ENCODE measurements at regions of chr19 and their contacts with region 1.

Region 1: DNA sequence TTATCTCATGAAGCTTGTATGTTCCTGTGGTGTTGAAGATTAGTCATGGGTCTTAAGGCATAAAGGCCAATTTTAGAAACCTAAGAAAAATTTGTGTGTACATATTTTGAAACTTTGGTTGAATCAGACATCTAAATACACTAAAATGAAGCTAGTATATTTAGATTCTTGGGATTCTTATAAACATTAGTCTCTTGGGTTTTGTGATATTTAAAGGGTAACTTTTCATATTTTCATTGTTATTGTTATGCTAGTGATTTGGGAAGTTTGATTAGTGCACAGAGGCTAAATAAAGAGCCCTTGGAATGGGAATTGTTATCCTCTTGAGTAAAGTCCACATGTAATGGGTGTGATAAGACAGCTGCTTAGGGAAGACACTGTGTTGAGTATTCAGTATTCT is 24.5 kb downstream of the UBA2 start:
- DNase-seq: no peak
- H3K4me3 ChIP-seq: no peak overlapping the region
- H3K27ac ChIP-seq: no peak overlapping the region
- H3K4me1 ChIP-seq: no peaks in the 10 kb centered on the region
- H3K27me3 ChIP-seq: no peaks in the 10 kb centered on the region
- CTCF ChIP-seq: no peak

Region 2: GRCh38 chr19:34409189-34410164 is 43.2 kb before region 1 on chr19:
- CTCF ChIA-PET with region 1: no interaction called
- dilution Hi-C with region 1: loop called (anchors 5 kb)
- in situ Hi-C with region 1: no loop called
- intact Hi-C with region 1: no loop called
- DNase-seq: no peak
- H3K4me3 ChIP-seq: no peak overlapping the region
- H3K27ac ChIP-seq: no peak overlapping the region
- H3K4me1 ChIP-seq: no peaks in the 10 kb centered on the region
- H3K27me3 ChIP-seq: no peaks in the 10 kb centered on the region
- CTCF ChIP-seq: no peak

Region 3: DNA sequence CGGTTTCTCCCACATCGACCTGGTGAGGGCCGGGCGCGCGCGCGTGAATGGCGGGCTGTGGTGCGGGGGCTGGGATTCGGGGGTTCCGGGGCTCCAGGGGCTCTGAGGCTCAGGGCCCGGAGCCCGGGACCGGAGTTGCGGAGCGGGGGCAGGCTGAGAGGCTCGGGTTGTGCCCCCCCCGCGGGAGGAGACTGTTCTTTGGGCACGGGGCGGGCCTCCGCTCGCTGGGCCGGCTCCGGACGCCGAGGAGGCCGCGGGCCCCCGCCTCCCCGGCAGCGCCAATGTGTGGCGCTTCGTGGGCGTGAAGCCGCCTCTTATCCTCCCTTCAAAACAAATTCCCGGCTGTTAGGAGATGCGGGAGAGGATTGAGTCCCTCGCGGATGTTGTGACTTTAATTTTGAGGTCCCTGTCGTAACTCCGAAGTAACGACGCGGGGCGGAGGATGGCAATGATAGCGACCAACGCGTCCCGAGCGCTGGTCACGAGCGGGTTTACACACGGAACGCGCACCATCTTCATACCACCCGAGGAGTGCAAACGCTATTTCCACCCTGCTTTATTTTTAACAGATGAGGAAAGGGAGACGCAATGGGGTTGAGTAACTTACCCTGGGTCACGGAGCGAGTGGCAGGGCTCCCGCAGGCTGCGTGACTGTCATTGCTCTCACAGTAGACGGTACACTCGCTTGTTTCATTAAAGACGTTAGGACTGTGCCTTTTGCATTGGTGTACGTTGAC is 24.0 kb before region 1 on chr19:
- CTCF ChIA-PET with region 1: no interaction called
- dilution Hi-C with region 1: no loop called
- in situ Hi-C with region 1: no loop called
- intact Hi-C with region 1: no loop called
- DNase-seq: peak; percentile 57
- H3K4me3 ChIP-seq: peak overlapping the region; percentile 58 to 90 (median 79)
- H3K27ac ChIP-seq: peak overlapping the region; percentile 59
- H3K4me1 ChIP-seq: peaks cover 24% of the 10 kb centered on the region
- H3K27me3 ChIP-seq: no peaks in the 10 kb centered on the region
- CTCF ChIP-seq: no peak

Region 4: DNA sequence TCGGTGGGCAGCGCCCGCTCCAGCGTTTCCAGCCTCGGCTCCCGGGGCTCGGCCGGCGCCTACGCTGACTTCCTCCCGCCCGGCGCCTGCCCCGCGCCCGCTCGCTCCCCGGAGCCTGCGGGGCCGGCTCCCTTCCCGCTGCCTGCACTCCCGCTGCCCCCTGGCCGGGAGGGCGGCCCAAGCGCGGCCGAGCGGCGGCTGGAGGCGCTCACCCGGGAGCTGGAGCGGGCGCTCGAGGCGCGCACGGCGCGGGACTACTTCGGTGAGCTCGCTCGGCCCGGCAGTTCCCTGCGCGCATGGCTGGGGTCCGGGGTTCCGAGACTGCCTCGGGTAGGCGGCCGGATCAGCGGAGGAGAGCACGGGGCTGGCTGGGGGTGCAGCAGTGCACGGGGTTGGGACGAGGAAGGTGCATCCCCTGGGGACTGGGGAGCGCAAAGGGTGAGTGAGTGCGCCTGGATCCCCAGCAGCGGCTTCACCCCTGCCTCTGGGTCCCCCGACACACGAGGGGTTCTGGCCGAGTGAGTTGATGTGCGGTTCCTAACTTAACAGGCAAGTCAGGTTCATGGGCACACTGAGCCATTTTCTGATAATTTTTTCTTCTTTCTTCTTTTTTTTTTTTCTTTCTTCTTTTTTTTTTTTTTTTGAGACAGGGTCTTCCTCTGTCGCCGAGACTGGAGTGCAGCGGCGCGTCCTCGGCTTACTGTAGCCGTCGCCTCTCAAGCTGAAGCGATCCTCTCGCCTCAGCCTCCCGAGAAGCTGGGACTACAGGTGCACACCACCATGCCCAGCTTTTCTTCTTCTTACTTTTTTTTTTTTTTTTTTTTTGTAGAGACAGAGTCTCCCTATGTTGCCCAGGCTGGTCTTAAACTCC is 29.9 kb after region 1 on chr19:
- CTCF ChIA-PET with region 1: no interaction called
- dilution Hi-C with region 1: no loop called
- in situ Hi-C with region 1: no loop called
- intact Hi-C with region 1: no loop called
- DNase-seq: peak; percentile 47
- H3K4me3 ChIP-seq: peak overlapping the region; percentile 39 to 61 (median 54)
- H3K27ac ChIP-seq: no peak overlapping the region
- H3K4me1 ChIP-seq: peaks cover 12% of the 10 kb centered on the region
- H3K27me3 ChIP-seq: no peaks in the 10 kb centered on the region
- CTCF ChIP-seq: no peak

Region 5: GRCh38 chr19:34662919-34663318 is 210.2 kb after region 1 on chr19:
- CTCF ChIA-PET with region 1: no interaction called
- dilution Hi-C with region 1: no loop called
- in situ Hi-C with region 1: no loop called
- intact Hi-C with region 1: no loop called
- DNase-seq: peak; percentile 14
- H3K4me3 ChIP-seq: no peak overlapping the region
- H3K27ac ChIP-seq: no peak overlapping the region
- H3K4me1 ChIP-seq: no peaks in the 10 kb centered on the region
- H3K27me3 ChIP-seq: no peaks in the 10 kb centered on the region
- CTCF ChIP-seq: peak; percentile 24 to 51

Measured in mammary epithelial cell (primary cell).